HEK293 (cell line): ENCODE measurements at regions of chr7 and their contacts with region 1.

Region 1: GRCh38 chr7:144391823-144392255 is 11.7 kb downstream of the NOBOX start:
- H3K4me3 ChIP-seq: no peak overlapping the region
- H3K27ac ChIP-seq: no peak overlapping the region
- H3K4me1 ChIP-seq: peaks cover 3% of the 10 kb centered on the region; the same call in 1 of the 2 replicates
- CTCF ChIP-seq: peak; percentile 69

Region 2: DNA sequence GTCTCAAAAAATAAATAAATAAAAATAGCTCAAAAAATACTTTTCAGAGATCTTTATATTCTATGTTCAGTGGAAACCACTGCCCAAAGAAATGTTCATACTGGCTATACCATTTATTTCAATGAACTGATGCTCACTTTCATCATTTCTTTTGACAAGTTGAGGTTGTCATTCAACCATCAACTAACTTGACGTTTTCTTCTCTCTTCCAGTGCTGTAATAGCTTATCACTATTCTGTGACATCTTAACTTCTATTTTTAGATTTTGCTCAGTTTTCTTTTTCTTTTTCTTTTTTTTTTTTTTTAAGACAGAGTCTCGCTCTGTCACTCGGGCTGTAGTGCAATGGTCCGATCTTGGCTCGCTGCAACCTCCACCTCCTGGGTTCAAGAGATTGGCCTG is 217.2 kb before region 1 on chr7:
- CTCF ChIA-PET with region 1: interaction called, 10 read pairs
- POLR2A ChIA-PET with region 1: no interaction called
- H3K4me3 ChIP-seq: no peak overlapping the region
- H3K27ac ChIP-seq: no peak overlapping the region
- H3K4me1 ChIP-seq: no peaks in the 10 kb centered on the region
- CTCF ChIP-seq: no peak

Region 3: DNA sequence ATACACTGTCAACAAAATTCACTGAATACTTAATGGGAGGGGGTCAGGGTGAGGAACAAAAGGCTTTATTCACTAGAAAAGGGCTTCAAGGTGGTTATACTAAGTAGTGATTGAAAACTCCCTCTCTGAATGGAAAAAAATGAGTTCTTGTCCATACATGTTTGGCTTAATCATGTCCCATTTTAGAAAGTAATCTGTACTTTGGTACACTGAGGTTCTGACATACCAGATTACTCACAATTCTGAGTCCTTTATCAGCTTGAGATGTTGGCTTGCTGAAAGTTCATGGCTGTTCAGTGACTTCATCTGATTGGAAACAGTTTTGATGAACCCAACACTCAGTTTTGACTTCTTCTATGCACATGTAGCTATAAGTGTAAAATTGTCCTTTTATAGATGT is 24.5 kb after region 1 on chr7:
- CTCF ChIA-PET with region 1: no interaction called
- POLR2A ChIA-PET with region 1: no interaction called
- H3K4me3 ChIP-seq: no peak overlapping the region
- H3K27ac ChIP-seq: no peak overlapping the region
- H3K4me1 ChIP-seq: no peaks in the 10 kb centered on the region
- CTCF ChIP-seq: no peak

Region 4: GRCh38 chr7:144454256-144455039 is 62.6 kb after region 1 on chr7:
- CTCF ChIA-PET with region 1: no interaction called
- POLR2A ChIA-PET with region 1: no interaction called
- H3K4me3 ChIP-seq: no peak overlapping the region
- H3K27ac ChIP-seq: no peak overlapping the region
- H3K4me1 ChIP-seq: no peaks in the 10 kb centered on the region
- CTCF ChIP-seq: no peak